CD8-positive, alpha-beta T cell (primary cell): ENCODE measurements at regions of chr3 and their contacts with region 1.

Region 1: GRCh38 chr3:89533275-89533674 is 425.9 kb downstream of the EPHA3 start:
- DNase-seq: no peak
- ATAC-seq: no peak
- H3K4me3 ChIP-seq: no peak overlapping the region
- H3K4me3 Mint-ChIP-seq: no peak overlapping the region
- H3K27ac ChIP-seq: no peak overlapping the region
- H3K27ac Mint-ChIP-seq: no peak overlapping the region
- H3K4me1 ChIP-seq: no peaks in the 10 kb centered on the region
- H3K4me1 Mint-ChIP-seq: no peaks in the 10 kb centered on the region
- H3K27me3 ChIP-seq: no peaks in the 10 kb centered on the region
- H3K27me3 Mint-ChIP-seq: no peaks in the 10 kb centered on the region
- CTCF ChIP-seq: no peak

Region 2: GRCh38 chr3:89179355-89180001 is 353.8 kb before region 1 on chr3:
- CTCF ChIA-PET with region 1: no interaction called
- POLR2A ChIA-PET with region 1: no interaction called
- intact Hi-C with region 1: loop called in 1 of 2 experiments (anchors 10 kb)
- DNase-seq: no peak
- ATAC-seq: no peak
- H3K4me3 ChIP-seq: no peak overlapping the region
- H3K4me3 Mint-ChIP-seq: no peak overlapping the region
- H3K27ac ChIP-seq: no peak overlapping the region
- H3K27ac Mint-ChIP-seq: no peak overlapping the region
- H3K4me1 ChIP-seq: no peaks in the 10 kb centered on the region
- H3K4me1 Mint-ChIP-seq: no peaks in the 10 kb centered on the region
- H3K27me3 ChIP-seq: no peaks in the 10 kb centered on the region
- H3K27me3 Mint-ChIP-seq: no peaks in the 10 kb centered on the region
- CTCF ChIP-seq: no peak

Region 3: DNA sequence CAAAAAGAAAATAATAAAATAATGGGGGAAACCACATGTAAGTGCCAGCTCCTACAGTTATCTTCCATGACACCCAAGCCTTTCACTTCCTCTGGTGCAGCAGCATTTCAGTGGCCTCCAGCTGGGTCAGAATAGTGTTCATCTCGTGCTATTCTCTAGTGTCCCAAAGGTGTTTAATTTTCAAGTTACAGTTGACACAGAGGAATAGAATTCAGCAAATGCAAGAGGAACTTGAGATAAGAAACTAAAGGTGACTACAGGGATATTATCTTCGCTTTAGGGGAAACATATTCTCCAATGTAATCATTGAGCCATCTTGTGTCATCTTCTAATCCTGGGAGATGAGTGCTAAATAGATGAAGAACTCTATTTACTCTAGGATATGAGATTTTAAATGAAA is 213.1 kb before region 1 on chr3:
- CTCF ChIA-PET with region 1: no interaction called
- POLR2A ChIA-PET with region 1: no interaction called
- intact Hi-C with region 1: no loop called
- DNase-seq: no peak
- ATAC-seq: no peak
- H3K4me3 ChIP-seq: no peak overlapping the region
- H3K4me3 Mint-ChIP-seq: no peak overlapping the region
- H3K27ac ChIP-seq: no peak overlapping the region
- H3K27ac Mint-ChIP-seq: no peak overlapping the region
- H3K4me1 ChIP-seq: no peaks in the 10 kb centered on the region
- H3K4me1 Mint-ChIP-seq: no peaks in the 10 kb centered on the region
- H3K27me3 ChIP-seq: no peaks in the 10 kb centered on the region
- H3K27me3 Mint-ChIP-seq: no peaks in the 10 kb centered on the region
- CTCF ChIP-seq: no peak